ENCODE measurements at regions of chr11 and their contacts with region 1.

Region 1: DNA sequence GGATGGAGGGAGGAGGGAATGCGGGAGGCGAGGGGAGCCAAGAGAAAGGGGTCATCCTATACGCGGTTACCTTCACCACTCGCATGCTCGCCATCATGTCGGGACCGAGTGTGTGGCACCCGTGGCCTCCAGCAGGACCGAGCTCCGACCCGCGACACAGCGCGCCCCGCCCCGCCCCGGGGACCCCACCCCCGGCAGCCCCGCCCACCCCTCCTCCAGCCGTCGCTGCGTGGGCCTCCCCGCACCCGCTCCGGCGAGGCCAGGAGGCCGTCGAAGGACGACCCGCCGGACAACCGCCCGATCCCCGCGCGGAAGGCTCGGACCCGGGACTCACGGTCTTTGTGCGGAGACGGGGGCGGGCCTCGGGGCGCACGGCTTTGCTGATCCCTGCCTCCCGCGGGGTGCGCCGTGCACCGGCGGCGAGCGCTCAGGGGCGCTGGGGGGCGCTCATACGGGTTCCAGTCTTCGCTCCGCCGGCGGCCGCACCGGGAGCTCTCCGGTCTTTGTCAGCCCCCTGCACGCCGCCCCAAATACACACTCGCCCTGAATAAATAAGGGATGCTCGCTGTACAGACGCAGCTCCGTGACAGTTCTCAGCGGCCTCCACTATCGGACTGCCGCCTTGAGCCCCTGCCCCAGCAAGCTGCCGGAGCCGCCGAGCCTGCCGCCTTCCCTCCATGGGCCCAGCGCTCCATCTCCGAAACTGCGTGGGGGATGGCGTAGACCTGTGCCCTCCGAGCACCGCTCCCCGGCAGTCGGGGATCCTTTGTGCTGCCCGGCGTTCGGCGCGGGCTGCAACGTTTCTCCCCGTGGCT is at the start of gene UBE2L6:
- DNase-seq: peak; percentile 70
- H3K4me3 Mint-ChIP-seq: peak within 1 kb of the TSS; percentile 92
- H3K27ac Mint-ChIP-seq: peak within 1 kb of the TSS; percentile 98
- H3K4me1 Mint-ChIP-seq: peaks cover 31% of the 10 kb centered on the region
- H3K27me3 Mint-ChIP-seq: no peaks in the 10 kb centered on the region
- total RNA-seq, gene UBE2L6: 152 to 162 TPM

Region 2: GRCh38 chr11:57335343-57336110 is 232.2 kb before region 1 on chr11 and contains the start of gene SSRP1:
- CTCF ChIA-PET with region 1: no interaction called
- POLR2A ChIA-PET with region 1: no interaction called
- intact Hi-C with region 1: loop called (anchors 5 kb)
- DNase-seq: peak; percentile 92
- H3K4me3 Mint-ChIP-seq: peak within 1 kb of the TSS; percentile 91
- H3K27ac Mint-ChIP-seq: peak within 1 kb of the TSS; percentile 98
- H3K4me1 Mint-ChIP-seq: peaks cover 47% of the 10 kb centered on the region
- H3K27me3 Mint-ChIP-seq: no peaks in the 10 kb centered on the region
- total RNA-seq, gene SSRP1: 256 to 262 TPM

Region 3: GRCh38 chr11:57515332-57516060 is 52.2 kb before region 1 on chr11 and contains the start of gene SLC43A1:
- CTCF ChIA-PET with region 1: interaction called, 17 read pairs
- POLR2A ChIA-PET with region 1: no interaction called
- intact Hi-C with region 1: no loop called
- DNase-seq: peak; percentile 60
- H3K4me3 Mint-ChIP-seq: peak within 1 kb of the TSS; percentile 96
- H3K27ac Mint-ChIP-seq: peak within 1 kb of the TSS; percentile 79
- H3K4me1 Mint-ChIP-seq: peaks cover 29% of the 10 kb centered on the region
- H3K27me3 Mint-ChIP-seq: no peaks in the 10 kb centered on the region
- total RNA-seq, gene SLC43A1: 23.1 to 23.3 TPM

Region 4: DNA sequence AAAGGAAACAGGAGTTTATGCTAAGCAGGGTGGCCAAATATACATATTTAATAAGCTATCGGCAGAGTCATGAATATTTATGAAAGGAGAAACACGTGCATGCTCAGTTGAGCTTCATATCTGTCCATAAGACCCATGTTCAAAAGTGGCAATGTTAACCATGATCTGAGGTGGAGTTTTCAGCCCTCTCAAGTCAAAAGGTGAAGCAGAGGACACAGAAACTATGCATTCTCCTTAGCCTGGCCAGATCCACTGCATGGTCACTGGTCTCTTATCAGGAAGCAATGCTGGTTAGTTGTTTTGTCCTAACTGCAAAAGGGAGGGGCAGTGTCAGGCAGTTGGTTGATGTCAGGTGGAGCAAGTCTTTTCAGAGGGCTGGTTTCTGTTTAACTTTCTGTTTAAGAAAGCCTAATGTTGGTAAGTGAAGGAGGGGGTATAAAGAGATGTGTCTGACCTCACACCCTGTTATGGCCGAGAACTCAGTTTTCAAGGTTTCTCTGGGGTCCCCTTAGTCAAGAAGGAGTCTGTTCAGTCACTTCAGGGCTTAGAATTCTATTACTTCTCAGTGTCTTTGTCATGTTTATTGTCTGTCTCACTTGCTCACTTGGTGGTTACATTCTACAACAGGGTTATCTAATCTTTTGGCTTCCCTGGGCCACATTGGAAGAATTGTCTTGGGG is 168.0 kb after region 1 on chr11:
- CTCF ChIA-PET with region 1: no interaction called
- POLR2A ChIA-PET with region 1: no interaction called
- intact Hi-C with region 1: no loop called
- DNase-seq: no peak
- H3K4me3 Mint-ChIP-seq: no peak overlapping the region
- H3K27ac Mint-ChIP-seq: peak overlapping the region; percentile 8
- H3K4me1 Mint-ChIP-seq: peaks cover 10% of the 10 kb centered on the region
- H3K27me3 Mint-ChIP-seq: no peaks in the 10 kb centered on the region